ENCODE measurements at regions of chr4 and their contacts with region 1.

Region 1: DNA sequence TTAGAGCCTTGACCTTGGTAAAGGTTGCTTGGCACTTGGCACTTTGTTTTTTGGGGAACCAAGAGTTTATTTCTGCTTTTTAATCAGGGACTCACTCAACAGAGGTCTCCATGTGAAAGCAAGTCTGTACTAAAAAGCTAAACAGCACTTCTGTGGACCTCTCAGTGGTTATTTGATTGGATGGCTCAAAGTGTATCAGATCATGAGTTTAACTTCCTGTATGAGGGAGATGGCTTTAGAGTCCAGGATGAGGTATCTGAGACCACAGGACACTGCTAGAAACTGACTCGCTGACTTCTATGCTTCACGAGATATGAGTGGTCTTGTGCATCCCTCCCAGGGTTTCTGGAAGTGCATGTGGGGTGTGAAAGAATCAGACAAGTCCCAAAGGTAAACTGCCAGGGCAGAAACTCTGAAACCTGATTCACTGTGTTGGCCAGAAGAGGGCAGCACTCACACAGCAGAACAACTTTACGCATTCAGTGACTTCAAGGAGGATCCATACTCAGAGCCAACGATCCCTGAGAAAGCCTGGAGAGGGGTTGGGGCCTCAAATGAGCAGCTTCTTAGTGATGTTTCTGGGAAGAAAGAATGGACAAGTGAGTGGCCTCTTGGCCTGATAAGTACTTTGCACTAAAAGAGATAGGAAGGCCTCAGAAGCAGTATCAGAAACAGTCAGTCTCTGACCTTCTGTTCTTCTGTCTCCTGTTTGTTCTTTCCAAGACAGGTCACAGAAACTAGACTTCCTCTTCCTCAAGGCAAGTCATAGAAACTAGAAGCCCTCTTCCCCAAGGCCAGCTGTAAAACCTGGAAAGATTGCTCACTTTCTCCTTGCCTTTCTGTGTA is 220.3 kb upstream of the CXCL13 start:
- DNase-seq: no peak
- H3K4me3 ChIP-seq: no peak overlapping the region
- H3K27ac ChIP-seq: peak overlapping the region in 1 of 8 donors; percentile 10
- H3K4me1 ChIP-seq: peaks cover 0 to 6% (median 0%) of the 10 kb centered on the region in 6 donors
- H3K27me3 ChIP-seq: no peaks in the 10 kb centered on the region
- CTCF ChIP-seq: peak; percentile 29 to 79 (median 71)
- POLR2A ChIP-seq: no peak

Region 2: GRCh38 chr4:77156533-77156911 is 228.8 kb before region 1 on chr4:
- intact Hi-C with region 1: no loop called
- DNase-seq: peak; percentile 97
- H3K4me3 ChIP-seq: peak overlapping the region; percentile 81 to 99 (median 96)
- H3K27ac ChIP-seq: peak overlapping the region; percentile 81 to 99 (median 98)
- H3K4me1 ChIP-seq: peaks cover 18 to 86% (median 65%) of the 10 kb centered on the region in 6 donors
- H3K27me3 ChIP-seq: no peaks in the 10 kb centered on the region
- CTCF ChIP-seq: no peak
- POLR2A ChIP-seq: peak in 1 of 3 donors; percentile 49

Region 3: DNA sequence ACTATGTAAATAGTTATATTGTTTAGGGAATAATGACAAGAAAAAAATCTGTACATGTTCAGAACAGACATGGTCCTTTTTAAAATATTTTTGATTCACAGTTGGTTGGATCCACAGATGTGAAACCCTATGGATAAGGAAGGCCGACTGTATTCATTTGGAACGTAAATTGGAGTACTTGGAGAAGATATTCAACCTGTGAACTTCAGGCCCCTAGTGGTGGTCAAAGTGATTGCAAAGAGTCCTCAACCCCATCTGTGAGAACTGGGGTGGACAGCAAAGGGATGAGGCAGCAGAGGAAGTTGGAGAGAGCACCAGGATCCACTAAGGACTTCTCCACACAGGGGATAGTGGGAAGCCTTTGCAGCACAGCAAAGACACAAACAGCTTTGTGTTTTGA is 214.0 kb after region 1 on chr4:
- intact Hi-C with region 1: loop called (anchors 5 kb)
- DNase-seq: no peak
- H3K4me3 ChIP-seq: no peak overlapping the region
- H3K27ac ChIP-seq: no peak overlapping the region
- H3K4me1 ChIP-seq: peaks cover 0 to 11% (median 0%) of the 10 kb centered on the region in 6 donors
- H3K27me3 ChIP-seq: no peaks in the 10 kb centered on the region
- CTCF ChIP-seq: peak in 7 of 11 experiments; percentile 22 to 61 (median 39)
- POLR2A ChIP-seq: no peak